ENCODE measurements at regions of chr19 and their contacts with region 1.

Region 1: DNA sequence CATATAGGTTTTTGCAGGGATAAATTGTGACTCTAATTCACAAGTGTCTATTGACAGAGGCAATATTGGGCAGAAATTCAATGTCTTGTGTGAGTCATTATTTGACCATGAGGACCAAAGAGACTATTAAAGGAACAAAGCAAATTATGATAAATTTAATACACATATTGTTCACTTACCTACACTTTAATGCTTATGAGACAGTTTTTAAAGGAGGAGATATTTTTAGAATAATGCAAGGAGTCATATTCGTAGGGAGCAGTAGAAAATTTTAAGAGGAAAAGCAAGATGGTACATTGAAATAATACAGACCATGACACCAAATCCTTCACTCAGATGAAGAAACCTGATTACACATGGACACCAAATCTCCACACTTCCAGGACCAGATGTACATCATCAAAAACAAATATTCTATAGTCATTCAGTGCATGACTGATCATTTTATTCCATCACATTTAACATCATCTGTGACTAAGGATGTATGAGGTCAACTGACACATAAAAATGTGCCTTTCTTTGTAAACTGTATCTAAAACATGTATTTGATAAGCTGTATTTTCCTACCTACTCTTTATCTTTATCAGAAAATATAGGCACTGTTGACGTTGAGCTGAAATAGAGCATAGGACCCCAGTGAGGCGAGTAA is 4.2 kb upstream of the OR7A17 start:
- DNase-seq: no peak
- H3K4me3 ChIP-seq: no peak overlapping the region
- H3K27ac ChIP-seq: no peak overlapping the region
- H3K4me1 ChIP-seq: no peaks in the 10 kb centered on the region
- H3K27me3 ChIP-seq: no peaks in the 10 kb centered on the region
- CTCF ChIP-seq: no peak
- POLR2A ChIP-seq: no peak

Region 2: GRCh38 chr19:14571695-14572490 is 318.2 kb before region 1 on chr19 and contains the start of gene NDUFB7:
- intact Hi-C with region 1: loop called (anchors 10 kb)
- DNase-seq: peak; percentile 91 to 92
- H3K4me3 ChIP-seq: peak within 1 kb of the TSS; percentile 78 to 93 (median 84)
- H3K27ac ChIP-seq: peak within 1 kb of the TSS; percentile 60 to 69 (median 63)
- H3K4me1 ChIP-seq: peaks cover 16 to 19% of the 10 kb centered on the region in 2 donors
- H3K27me3 ChIP-seq: no peaks in the 10 kb centered on the region
- CTCF ChIP-seq: peak; percentile 33 to 92 (median 64)
- POLR2A ChIP-seq: peak in 1 of 2 donors; percentile 57
- total RNA-seq, gene NDUFB7: 208 to 584 (median 422) TPM

Region 3: GRCh38 chr19:14614099-14614412 is 276.1 kb before region 1 on chr19:
- intact Hi-C with region 1: no loop called
- DNase-seq: no peak
- H3K4me3 ChIP-seq: no peak overlapping the region
- H3K27ac ChIP-seq: no peak overlapping the region
- H3K4me1 ChIP-seq: no peaks in the 10 kb centered on the region
- H3K27me3 ChIP-seq: no peaks in the 10 kb centered on the region
- CTCF ChIP-seq: no peak
- POLR2A ChIP-seq: no peak

Region 4: GRCh38 chr19:15010501-15011300 is 120.6 kb after region 1 on chr19:
- intact Hi-C with region 1: no loop called
- DNase-seq: no peak
- H3K4me3 ChIP-seq: no peak overlapping the region
- H3K27ac ChIP-seq: no peak overlapping the region
- H3K4me1 ChIP-seq: no peaks in the 10 kb centered on the region
- H3K27me3 ChIP-seq: no peaks in the 10 kb centered on the region
- CTCF ChIP-seq: no peak
- POLR2A ChIP-seq: no peak

Measured in thyroid gland (tissue), 4 donors.